IMR-90 (cell line): ENCODE measurements at regions of chr20 and their contacts with region 1.

Region 1: GRCh38 chr20:46022411-46023147 is 6.4 kb upstream of the SLC12A5 start:
- DNase-seq: peak; percentile 9
- ATAC-seq: peak; percentile 25
- H3K4me3 ChIP-seq: no peak overlapping the region
- H3K27ac ChIP-seq: no peak overlapping the region
- H3K4me1 ChIP-seq: no peaks in the 10 kb centered on the region
- H3K27me3 ChIP-seq: peaks cover 39% of the 10 kb centered on the region
- CTCF ChIP-seq: peak; percentile 57
- POLR2A ChIP-seq: no peak
- RAD21 ChIP-seq: peak; percentile 48

Region 2: GRCh38 chr20:46040902-46041535 is 18.4 kb after region 1 on chr20:
- CTCF ChIA-PET with region 1: no interaction called
- POLR2A ChIA-PET with region 1: no interaction called
- dilution Hi-C with region 1: no loop called
- in situ Hi-C with region 1: no loop called
- intact Hi-C with region 1: loop called (anchors 1 kb)
- DNase-seq: peak; percentile 26
- ATAC-seq: peak; percentile 86
- H3K4me3 ChIP-seq: no peak overlapping the region
- H3K27ac ChIP-seq: no peak overlapping the region
- H3K4me1 ChIP-seq: no peaks in the 10 kb centered on the region
- H3K27me3 ChIP-seq: peaks cover 13% of the 10 kb centered on the region
- CTCF ChIP-seq: no peak
- POLR2A ChIP-seq: no peak
- RAD21 ChIP-seq: no peak

Region 3: GRCh38 chr20:46089417-46090388 is 67.1 kb after region 1 on chr20 and contains the start of gene NCOA5:
- CTCF ChIA-PET with region 1: no interaction called
- POLR2A ChIA-PET with region 1: no interaction called
- dilution Hi-C with region 1: no loop called
- in situ Hi-C with region 1: no loop called
- intact Hi-C with region 1: loop called (anchors 5 kb)
- DNase-seq: peak; percentile 95
- ATAC-seq: peak; percentile 94
- H3K4me3 ChIP-seq: peak within 1 kb of the TSS; percentile 91
- H3K27ac ChIP-seq: peak within 1 kb of the TSS; percentile 97
- H3K4me1 ChIP-seq: peaks cover 7% of the 10 kb centered on the region
- H3K27me3 ChIP-seq: no peaks in the 10 kb centered on the region
- CTCF ChIP-seq: peak; percentile 44
- POLR2A ChIP-seq: peak; percentile 94
- RAD21 ChIP-seq: no peak
- total RNA-seq, gene NCOA5: 20.6 and 22.5 TPM in 2 replicates

Region 4: DNA sequence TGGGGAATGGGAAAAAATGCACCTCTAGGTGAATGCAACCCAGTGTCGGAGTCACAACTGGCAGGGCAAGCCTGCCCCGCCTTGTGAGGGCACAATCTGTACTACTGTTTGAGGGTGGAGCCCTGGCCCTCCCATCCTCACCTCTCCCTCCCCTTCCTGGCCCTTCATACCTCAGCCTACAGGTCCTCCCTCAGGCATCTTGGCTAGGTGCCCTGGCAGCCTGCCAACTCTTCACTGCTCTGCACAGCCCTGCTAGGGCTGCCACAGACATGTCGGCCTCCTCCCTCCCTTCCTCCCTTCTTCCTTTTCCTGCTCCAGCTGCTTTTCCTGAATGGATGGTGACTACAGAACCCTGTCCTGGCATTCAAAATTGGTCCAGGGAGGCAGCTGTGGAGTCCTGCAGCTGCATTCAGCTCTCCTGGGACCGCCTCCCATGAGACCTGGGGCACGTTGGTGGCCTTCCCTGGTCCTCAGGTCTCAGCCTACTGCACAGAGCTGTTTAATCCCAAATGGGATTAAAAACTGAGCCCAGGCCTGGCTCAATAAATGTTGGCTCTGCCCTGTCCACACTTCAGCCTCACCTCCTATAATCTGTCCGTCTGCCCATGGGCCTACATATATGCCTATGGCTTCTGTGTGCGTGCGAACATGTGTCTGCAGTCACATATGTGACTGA is 233.0 kb after region 1 on chr20:
- CTCF ChIA-PET with region 1: no interaction called
- POLR2A ChIA-PET with region 1: no interaction called
- dilution Hi-C with region 1: no loop called
- in situ Hi-C with region 1: no loop called
- intact Hi-C with region 1: no loop called
- DNase-seq: no peak
- ATAC-seq: no peak
- H3K4me3 ChIP-seq: no peak overlapping the region
- H3K27ac ChIP-seq: no peak overlapping the region
- H3K4me1 ChIP-seq: no peaks in the 10 kb centered on the region
- H3K27me3 ChIP-seq: peaks cover 33% of the 10 kb centered on the region
- CTCF ChIP-seq: no peak
- POLR2A ChIP-seq: no peak
- RAD21 ChIP-seq: no peak